ENCODE measurements at regions of chr12 and their contacts with region 1.

Region 1: DNA sequence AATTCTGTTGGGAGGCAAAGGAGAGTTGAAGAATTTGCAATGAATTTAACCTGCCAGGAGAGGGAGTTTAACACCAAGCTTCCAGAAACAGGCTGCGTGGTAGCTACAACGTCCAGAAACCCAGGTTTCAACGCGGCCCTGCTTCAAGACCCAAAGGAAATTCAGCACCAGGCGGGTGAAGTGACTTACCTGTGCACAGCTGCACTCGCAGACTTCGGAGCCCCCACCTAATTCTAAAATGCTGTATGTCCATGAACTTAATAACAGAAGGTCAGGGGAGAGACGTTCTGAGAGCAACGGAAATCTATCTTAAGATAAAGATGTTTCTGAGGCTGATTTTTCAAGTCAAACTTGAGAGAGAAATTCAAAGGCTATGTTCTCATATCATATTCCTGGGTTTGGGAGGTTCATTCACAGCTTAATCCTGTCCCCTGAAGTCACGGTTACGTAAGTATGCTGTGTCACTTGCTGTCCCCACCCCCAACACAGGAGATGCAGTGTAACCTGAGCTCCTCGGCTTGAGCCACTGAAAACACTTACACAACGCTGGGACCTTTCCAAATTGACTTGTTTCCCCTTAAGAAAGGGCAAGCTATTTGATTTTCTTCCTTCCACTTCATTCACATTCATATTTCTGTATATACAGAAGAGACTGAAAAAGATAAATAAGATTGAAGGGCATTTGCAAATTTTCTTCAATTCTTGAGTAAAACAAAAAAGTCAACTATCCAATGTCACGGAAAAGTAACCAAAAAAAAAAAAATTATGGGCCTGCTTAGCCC is 22.7 kb downstream of the CLIP1 start:
- DNase-seq: peak in 3 of 4 donors; percentile 57 to 89 (median 80)
- ATAC-seq: peak; percentile 93
- H3K4me3 ChIP-seq: no peak overlapping the region
- H3K27ac ChIP-seq: peak overlapping the region; percentile 87 to 97
- H3K4me1 ChIP-seq: peaks cover 14 to 44% of the 10 kb centered on the region in 2 donors
- H3K27me3 ChIP-seq: no peaks in the 10 kb centered on the region
- CTCF ChIP-seq: peak; percentile 31 to 63

Region 2: GRCh38 chr12:122072031-122072970 is 327.5 kb before region 1 on chr12:
- intact Hi-C with region 1: no loop called
- DNase-seq: peak in 3 of 4 donors; percentile 14 to 58 (median 53)
- ATAC-seq: peak; percentile 59
- H3K4me3 ChIP-seq: no peak overlapping the region
- H3K27ac ChIP-seq: no peak overlapping the region
- H3K4me1 ChIP-seq: peaks cover 2 to 23% of the 10 kb centered on the region in 2 donors
- H3K27me3 ChIP-seq: no peaks in the 10 kb centered on the region
- CTCF ChIP-seq: no peak

Region 3: DNA sequence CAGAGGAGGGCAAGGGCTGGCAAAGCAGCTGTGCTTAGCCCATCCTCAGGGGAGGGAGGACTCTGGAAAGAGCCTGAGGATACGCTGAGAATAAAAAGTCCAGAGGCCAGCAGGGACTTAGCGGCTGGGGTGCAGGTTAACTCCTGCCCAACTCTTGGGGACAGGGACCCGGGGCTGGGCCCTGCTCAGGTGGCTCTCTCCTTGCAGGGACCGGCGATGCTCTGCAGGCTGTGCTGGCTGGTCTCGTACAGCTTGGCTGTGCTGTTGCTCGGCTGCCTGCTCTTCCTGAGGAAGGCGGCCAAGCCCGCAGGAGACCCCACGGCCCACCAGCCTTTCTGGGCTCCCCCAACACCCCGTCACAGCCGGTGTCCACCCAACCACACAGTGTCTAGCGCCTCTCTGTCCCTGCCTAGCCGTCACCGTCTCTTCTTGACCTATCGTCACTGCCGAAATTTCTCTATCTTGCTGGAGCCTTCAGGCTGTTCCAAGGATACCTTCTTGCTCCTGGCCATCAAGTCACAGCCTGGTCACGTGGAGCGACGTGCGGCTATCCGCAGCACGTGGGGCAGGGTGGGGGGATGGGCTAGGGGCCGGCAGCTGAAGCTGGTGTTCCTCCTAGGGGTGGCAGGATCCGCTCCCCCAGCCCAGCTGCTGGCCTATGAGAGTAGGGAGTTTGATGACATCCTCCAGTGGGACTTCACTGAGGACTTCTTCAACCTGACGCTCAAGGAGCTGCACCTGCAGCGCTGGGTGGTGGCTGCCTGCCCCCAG is 193.5 kb before region 1 on chr12:
- intact Hi-C with region 1: no loop called
- DNase-seq: no peak
- ATAC-seq: no peak
- H3K4me3 ChIP-seq: no peak overlapping the region
- H3K27ac ChIP-seq: no peak overlapping the region
- H3K4me1 ChIP-seq: peaks cover 0 to 17% of the 10 kb centered on the region in 2 donors
- H3K27me3 ChIP-seq: peaks cover 22 to 54% of the 10 kb centered on the region in 2 donors
- CTCF ChIP-seq: no peak

Region 4: DNA sequence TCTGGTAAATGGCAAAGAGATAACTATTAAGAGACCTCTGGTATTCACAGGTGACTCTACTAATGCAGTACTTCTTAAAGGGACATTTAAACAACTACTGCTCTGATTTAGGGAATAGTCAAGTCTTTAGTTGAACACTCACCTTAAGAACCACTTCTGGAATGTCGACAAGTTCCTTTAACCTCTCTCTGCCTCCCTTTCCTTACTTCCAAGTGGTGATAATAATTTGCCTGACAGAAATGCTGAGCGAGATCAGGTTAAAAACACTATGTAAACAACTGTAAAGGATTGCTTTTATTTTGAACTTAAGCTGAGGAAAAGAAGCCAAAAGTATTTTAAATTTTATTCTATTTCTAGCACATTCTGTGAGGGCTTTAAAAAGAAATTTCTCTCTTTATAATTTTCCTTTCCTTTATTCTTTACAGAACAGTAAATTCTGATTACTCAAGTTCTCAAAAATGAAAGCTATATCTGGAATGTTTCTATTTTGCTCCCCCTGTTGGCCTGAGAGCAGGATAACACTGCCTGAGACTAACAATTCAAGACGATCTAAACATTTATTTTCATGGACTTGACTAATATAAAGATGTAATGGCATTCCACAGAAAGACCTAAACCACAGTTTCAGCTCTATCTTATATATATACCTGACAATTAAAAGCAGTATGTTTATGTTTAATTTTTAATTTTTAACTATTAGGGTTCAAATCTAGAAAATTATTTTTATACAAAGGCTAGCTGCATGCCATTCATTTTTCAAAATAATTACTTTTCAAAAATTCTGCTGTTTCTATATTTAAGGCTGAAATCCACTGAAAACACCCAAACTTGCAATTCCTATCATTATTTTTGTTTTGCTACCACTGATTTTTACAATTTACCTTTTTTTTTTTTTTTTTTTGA is 71.8 kb after region 1 on chr12:
- intact Hi-C with region 1: loop called (anchors 10 kb)
- DNase-seq: peak in 2 of 4 donors; percentile 54 to 66
- ATAC-seq: peak; percentile 88
- H3K4me3 ChIP-seq: no peak overlapping the region
- H3K27ac ChIP-seq: peak overlapping the region; percentile 46 to 78
- H3K4me1 ChIP-seq: peaks cover 0 to 7% of the 10 kb centered on the region in 2 donors
- H3K27me3 ChIP-seq: no peaks in the 10 kb centered on the region
- CTCF ChIP-seq: peak; percentile 70 to 73

Region 5: DNA sequence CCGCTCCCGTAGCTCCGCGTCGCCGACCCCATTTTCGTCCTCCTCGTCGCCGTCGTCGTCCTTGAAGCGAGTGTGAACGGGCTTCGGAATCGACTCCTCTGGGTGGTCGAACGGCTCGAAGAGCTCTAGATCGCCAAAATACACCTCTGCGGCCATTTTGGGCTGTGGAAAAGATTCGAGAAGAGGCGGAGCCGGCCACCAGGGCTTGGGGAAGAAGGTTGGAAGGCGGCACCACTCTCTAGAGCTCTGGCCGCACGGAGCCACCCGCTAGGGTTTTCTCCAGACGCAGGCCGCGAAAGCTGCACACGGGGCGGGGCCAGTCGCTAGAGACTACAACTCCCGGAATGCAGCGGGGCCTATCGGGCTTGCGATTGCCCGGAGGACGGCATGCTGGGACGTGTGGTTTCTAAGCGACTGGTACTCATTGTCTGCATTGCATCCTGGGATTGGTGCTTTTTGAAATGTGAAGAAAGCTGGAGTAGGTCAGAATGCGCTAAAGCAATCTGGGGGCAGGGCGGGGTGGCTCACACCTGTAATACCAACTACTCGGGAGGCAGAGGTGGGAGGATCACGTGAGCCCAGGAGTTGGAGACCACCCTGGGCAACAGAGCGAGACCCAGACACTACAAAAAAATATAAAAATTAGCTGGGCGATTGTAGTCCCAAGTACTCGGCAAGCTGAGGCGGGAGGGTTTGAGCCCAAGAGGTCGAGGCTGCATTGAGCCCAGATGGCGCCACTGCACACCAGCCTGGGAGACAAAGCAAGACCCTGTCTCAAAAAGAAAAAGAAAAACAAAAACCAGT is 101.1 kb after region 1 on chr12 and contains the start of gene ZCCHC8:
- intact Hi-C with region 1: no loop called
- DNase-seq: peak; percentile 96 to 99 (median 98)
- ATAC-seq: peak; percentile 99
- H3K4me3 ChIP-seq: peak within 1 kb of the TSS; percentile 62 to 84
- H3K27ac ChIP-seq: peak within 1 kb of the TSS; percentile 96 to 97
- H3K4me1 ChIP-seq: peaks cover 10 to 44% of the 10 kb centered on the region in 2 donors
- H3K27me3 ChIP-seq: no peaks in the 10 kb centered on the region
- CTCF ChIP-seq: peak in 1 of 2 donors; percentile 27
- polyA plus RNA-seq, gene ZCCHC8: 45.2 to 59.0 (median 50.8) TPM

Region 6: DNA sequence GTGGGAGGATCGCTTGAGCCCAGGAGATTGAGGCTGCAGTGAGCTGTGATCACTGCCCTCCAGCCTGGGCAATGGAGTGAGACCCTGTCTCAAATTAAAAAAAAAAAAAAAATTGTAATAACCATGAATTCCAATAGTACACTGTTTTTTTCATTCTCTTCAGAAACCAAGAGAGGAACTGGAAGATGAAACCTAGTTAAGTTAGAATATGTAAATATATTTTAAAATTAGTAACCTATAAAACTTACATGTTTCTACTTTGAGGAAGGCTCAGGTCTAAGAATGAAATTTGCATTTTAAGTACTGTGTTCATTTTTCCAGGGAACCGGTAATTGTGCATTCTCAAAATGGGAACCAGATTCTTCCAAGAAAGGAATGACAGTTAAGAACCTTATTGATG is 146.1 kb after region 1 on chr12:
- intact Hi-C with region 1: no loop called
- DNase-seq: no peak
- ATAC-seq: no peak
- H3K4me3 ChIP-seq: no peak overlapping the region
- H3K27ac ChIP-seq: no peak overlapping the region
- H3K4me1 ChIP-seq: no peaks in the 10 kb centered on the region
- H3K27me3 ChIP-seq: no peaks in the 10 kb centered on the region
- CTCF ChIP-seq: no peak

Measured in left lung (tissue), 14 donors.